ENCODE measurements at regions of chr12 and their contacts with region 1.

Region 1: DNA sequence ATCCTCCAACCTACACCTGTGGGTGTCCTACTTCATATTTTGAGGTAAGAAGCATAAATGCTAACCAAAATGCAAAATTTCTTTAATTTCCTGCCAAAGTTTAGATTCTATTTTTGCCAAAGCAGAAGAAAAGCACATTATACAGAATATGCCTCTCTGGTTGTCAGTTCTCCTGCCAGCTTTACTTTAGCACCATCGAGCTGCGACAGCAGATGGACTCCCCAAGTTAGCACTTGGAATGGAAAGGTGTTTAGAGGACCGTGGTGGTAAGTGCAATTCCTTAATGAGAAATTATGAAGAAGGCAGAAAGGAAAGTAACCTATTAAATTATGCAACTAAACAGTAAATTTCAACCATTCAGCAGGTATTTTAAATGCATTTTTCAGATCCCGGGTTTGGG is 326.6 kb downstream of the RERGL start:
- DNase-seq: no peak
- H3K4me3 ChIP-seq: no peak overlapping the region
- H3K27ac ChIP-seq: no peak overlapping the region
- H3K4me1 ChIP-seq: no peaks in the 10 kb centered on the region
- H3K27me3 ChIP-seq: no peaks in the 10 kb centered on the region
- CTCF ChIP-seq: no peak
- EP300 ChIP-seq: no peak
- POLR2A ChIP-seq: no peak

Region 2: DNA sequence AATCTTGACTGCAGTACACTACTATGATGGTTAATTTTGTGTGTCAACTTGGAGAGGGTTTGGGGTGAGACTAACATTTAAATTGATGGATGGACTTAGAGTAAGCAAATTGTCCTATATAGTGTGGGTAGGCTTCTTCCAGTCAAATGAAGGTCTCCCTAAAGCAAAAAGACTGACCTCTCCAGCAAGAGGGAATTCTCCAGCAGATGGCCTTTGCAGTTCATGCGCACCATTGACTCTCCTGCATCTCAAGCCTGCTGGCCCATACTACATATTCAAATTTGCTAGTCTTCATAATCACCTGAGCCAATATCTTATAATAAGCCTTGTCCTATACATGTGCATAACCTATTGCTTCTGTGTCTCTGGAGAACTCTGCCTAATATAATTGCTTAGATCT is 66.4 kb after region 1 on chr12:
- intact Hi-C with region 1: no loop called
- DNase-seq: no peak
- H3K4me3 ChIP-seq: no peak overlapping the region
- H3K27ac ChIP-seq: no peak overlapping the region
- H3K4me1 ChIP-seq: no peaks in the 10 kb centered on the region
- H3K27me3 ChIP-seq: no peaks in the 10 kb centered on the region
- CTCF ChIP-seq: no peak
- EP300 ChIP-seq: no peak
- POLR2A ChIP-seq: no peak

Region 3: DNA sequence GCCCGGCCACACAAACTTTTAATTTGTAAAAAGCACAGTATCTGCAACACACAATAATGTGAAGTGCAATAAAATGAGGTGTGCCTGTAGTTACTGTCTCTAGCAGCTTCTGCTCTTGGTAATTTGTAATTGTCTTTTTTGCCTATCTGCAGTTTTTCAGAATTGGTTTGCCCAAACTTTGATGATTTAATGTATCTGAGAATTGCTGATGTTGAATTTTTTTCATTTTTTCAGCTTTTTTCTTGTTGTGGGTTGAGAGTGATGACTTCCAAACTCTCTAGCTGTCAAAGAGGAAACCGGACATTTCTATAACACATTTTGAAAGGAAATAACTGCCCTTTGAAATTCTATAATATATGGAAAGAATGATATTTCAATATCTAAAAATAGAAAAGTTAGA is 89.7 kb after region 1 on chr12:
- intact Hi-C with region 1: loop called (anchors 5 kb)
- DNase-seq: no peak
- H3K4me3 ChIP-seq: no peak overlapping the region
- H3K27ac ChIP-seq: no peak overlapping the region
- H3K4me1 ChIP-seq: no peaks in the 10 kb centered on the region
- H3K27me3 ChIP-seq: no peaks in the 10 kb centered on the region
- CTCF ChIP-seq: no peak
- EP300 ChIP-seq: no peak
- POLR2A ChIP-seq: no peak

Measured in stomach (tissue), 19 donors.